IMR-90 (cell line): ENCODE measurements at regions of chr1 and their contacts with region 1.

Region 1: DNA sequence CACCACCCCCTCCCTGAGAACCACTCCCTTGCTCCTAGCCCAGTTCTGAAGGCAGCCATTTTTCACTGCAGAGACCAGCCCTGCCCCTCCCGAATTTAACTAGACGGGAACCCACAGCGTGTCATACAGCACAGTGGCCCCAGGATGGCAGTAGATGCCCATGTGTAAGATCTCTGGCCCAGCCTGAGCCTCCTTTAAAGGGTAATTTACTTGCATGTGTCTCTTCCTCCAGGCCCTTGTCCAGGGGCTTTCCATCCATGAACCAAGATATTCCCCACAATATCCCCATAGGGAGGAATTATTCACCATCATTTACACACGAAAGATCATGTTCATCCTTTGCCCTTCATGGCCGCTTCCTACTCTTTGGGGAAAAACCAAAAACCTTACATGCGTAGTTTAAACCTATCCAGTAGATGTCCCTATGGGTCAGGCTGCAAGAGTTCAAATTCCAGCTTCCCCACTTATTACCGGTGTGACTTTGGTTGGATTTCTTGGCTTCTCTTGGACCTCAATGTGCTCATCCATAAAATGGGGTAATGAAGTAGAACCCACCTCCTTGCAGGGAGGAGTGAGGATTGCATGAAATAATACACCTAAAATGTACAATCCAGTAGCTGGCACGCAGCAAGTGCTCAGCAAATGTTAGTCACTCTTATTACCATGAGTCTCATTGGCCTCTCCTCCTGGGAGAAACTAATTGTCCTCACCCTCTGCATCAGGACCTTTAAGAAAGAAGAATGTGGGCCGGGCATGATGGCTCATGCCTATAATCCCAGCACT is 4.0 kb upstream of the LACTBL1 start:
- DNase-seq: peak; percentile 85
- ATAC-seq: peak; percentile 98
- H3K4me3 ChIP-seq: no peak overlapping the region
- H3K27ac ChIP-seq: no peak overlapping the region
- H3K4me1 ChIP-seq: no peaks in the 10 kb centered on the region; the same call in 1 of the 2 replicates
- H3K27me3 ChIP-seq: peaks cover 28% of the 10 kb centered on the region
- CTCF ChIP-seq: peak; percentile 88
- POLR2A ChIP-seq: 0 out of 2 replicates have a peak, but pooled peaks have one; percentile 33
- RAD21 ChIP-seq: peak; percentile 92

Region 2: GRCh38 chr1:23098463-23099170 is 122.0 kb after region 1 on chr1:
- CTCF ChIA-PET with region 1: no interaction called
- POLR2A ChIA-PET with region 1: no interaction called
- dilution Hi-C with region 1: no loop called
- in situ Hi-C with region 1: no loop called
- intact Hi-C with region 1: loop called (anchors 1 kb)
- DNase-seq: peak; percentile 77
- ATAC-seq: peak; percentile 59
- H3K4me3 ChIP-seq: no peak overlapping the region
- H3K27ac ChIP-seq: no peak overlapping the region
- H3K4me1 ChIP-seq: peaks cover 18% of the 10 kb centered on the region
- H3K27me3 ChIP-seq: no peaks in the 10 kb centered on the region
- CTCF ChIP-seq: peak; percentile 98
- POLR2A ChIP-seq: peak; percentile 54
- RAD21 ChIP-seq: peak; percentile 98

Region 3: GRCh38 chr1:23273450-23274133 is 296.9 kb after region 1 on chr1:
- CTCF ChIA-PET with region 1: interaction called, 3 read pairs
- POLR2A ChIA-PET with region 1: no interaction called
- dilution Hi-C with region 1: no loop called
- in situ Hi-C with region 1: loop called (anchors 5 kb)
- intact Hi-C with region 1: loop called (anchors 2 kb)
- DNase-seq: peak; percentile 95
- ATAC-seq: peak; percentile 89
- H3K4me3 ChIP-seq: no peak overlapping the region
- H3K27ac ChIP-seq: peak overlapping the region; percentile 12; the same call in 1 of the 2 replicates
- H3K4me1 ChIP-seq: no peaks in the 10 kb centered on the region; the same call in 1 of the 2 replicates
- H3K27me3 ChIP-seq: no peaks in the 10 kb centered on the region
- CTCF ChIP-seq: no peak
- POLR2A ChIP-seq: no peak
- RAD21 ChIP-seq: no peak

Region 4: GRCh38 chr1:23403735-23404486 is 427.3 kb after region 1 on chr1:
- CTCF ChIA-PET with region 1: no interaction called
- POLR2A ChIA-PET with region 1: no interaction called
- dilution Hi-C with region 1: no loop called
- in situ Hi-C with region 1: no loop called
- intact Hi-C with region 1: loop called (anchors 5 kb)
- DNase-seq: peak; percentile 89
- ATAC-seq: peak; percentile 89
- H3K4me3 ChIP-seq: no peak overlapping the region
- H3K27ac ChIP-seq: peak overlapping the region; percentile 23
- H3K4me1 ChIP-seq: peaks cover 21% of the 10 kb centered on the region
- H3K27me3 ChIP-seq: no peaks in the 10 kb centered on the region
- CTCF ChIP-seq: peak; percentile 89
- POLR2A ChIP-seq: no peak
- RAD21 ChIP-seq: peak; percentile 93

Region 5: DNA sequence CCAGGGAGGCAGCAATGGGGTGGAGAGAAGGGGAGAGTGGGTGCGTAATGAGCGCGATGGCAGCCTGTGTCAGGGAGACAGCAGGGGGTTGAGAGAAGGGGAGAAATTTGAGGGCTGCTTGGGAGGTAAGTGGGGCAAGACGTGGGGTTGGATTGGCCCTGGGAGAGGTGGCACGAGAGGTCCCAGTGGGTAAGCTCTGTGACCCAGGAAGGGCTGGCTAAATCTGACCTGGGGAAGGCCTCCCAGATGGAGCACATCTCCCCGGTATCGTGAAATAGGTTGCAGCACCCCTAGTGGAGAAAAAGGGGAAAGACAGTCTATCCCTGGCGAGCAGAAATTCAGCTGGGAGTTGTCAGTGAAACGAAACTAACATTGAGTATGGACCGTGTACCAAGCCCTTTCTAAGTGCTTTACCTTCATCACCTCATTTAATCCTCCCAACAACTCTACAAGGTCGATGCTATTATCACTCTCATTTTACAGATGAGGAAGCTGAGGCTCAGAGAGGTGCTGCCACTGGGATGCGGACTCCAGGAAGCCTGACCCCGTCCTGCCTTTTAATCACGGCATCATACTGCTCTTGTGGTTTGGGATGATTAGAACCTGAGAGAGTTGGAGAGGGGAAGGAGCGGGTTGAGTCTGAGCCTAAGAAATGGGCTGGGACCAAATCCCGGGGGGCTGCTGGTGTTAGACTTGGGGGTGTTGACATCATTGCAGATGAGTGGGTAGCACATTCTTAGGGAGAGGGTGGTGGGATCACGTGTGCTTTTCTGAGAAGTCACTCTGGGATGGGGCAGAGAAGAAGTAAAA is 658.4 kb after region 1 on chr1:
- CTCF ChIA-PET with region 1: no interaction called
- POLR2A ChIA-PET with region 1: no interaction called
- dilution Hi-C with region 1: no loop called
- in situ Hi-C with region 1: loop called (anchors 25 kb)
- intact Hi-C with region 1: loop called (anchors 10 kb)
- DNase-seq: peak; percentile 77
- ATAC-seq: peak; percentile 88
- H3K4me3 ChIP-seq: peak overlapping the region; percentile 66
- H3K27ac ChIP-seq: peak overlapping the region; percentile 90
- H3K4me1 ChIP-seq: peaks cover 10% of the 10 kb centered on the region
- H3K27me3 ChIP-seq: no peaks in the 10 kb centered on the region; the same call in 1 of the 2 replicates
- CTCF ChIP-seq: peak; percentile 94
- POLR2A ChIP-seq: peak; percentile 51; the same call in 1 of the 2 replicates
- RAD21 ChIP-seq: peak; percentile 72